Aorta (tissue), 5 donors: ENCODE measurements at regions of chr6 and their contacts with region 1.

Region 1: DNA sequence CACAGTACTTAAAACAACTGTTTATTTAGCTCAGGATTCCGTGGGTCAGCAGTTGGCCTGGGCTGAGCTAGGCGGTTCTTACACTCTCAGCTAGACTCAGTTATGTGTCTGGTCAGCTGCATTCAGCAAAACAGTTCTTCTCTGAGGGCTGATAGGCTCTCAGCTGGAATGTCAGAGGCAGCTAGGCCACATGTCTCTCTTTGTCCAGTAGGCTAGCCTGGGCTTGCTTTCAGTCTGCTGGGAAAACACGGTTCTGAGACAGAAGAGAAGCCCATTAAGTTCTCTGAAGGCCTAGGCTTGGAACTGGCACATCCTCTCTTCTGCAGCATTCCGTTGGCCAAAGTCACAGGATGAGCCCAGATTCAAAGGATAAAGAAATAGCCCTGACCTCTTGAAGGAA is 65.6 kb downstream of the TULP4 start:
- DNase-seq: no peak
- ATAC-seq: no peak
- H3K4me3 ChIP-seq: no peak overlapping the region
- H3K27ac ChIP-seq: no peak overlapping the region
- H3K4me1 ChIP-seq: peaks cover under 1 to 3% of the 10 kb centered on the region in 2 donors
- H3K27me3 ChIP-seq: no peaks in the 10 kb centered on the region

Region 2: GRCh38 chr6:158559895-158560835 is 182.3 kb after region 1 on chr6 and contains the start of gene TMEM181:
- intact Hi-C with region 1: loop called in 1 of 2 experiments (anchors 10 kb)
- DNase-seq: peak; percentile 92 to 96
- ATAC-seq: peak; percentile 94
- H3K4me3 ChIP-seq: peak within 1 kb of the TSS; percentile 67 to 96
- H3K27ac ChIP-seq: peak within 1 kb of the TSS; percentile 47 to 78
- H3K4me1 ChIP-seq: no peaks in the 10 kb centered on the region
- H3K27me3 ChIP-seq: no peaks in the 10 kb centered on the region
- total RNA-seq, gene TMEM181: 23.7 to 25.9 TPM

Region 3: DNA sequence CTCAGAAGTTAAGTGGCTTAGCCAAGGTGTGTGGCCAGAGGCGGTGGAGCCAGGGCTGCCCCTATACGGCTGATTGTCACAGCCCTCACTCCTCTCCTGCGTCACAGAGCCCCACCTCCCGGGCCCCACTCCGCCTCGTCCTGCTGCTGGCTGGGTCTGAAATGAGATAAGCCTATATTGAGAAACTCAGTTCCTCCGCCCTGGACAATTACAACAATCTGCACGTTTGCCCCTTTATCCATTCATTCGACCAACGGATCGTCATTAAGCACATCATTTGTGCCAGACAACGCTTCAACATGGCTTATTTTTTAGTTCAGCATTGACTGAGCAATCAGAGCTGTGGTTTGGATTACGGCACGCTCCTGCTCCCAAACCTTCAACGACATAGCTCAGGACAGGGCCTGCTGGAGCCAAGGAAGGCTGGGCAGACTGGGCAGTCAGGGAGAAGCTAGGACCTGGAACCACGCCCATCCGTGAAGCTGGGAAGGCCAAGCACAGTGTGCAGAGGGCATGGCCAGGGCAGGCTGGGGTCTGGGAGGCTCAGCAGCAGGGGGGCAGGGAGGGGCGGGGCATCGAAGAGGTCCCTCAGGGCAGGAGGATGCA is 457.9 kb after region 1 on chr6:
- intact Hi-C with region 1: no loop called
- DNase-seq: peak in 1 of 2 donors; percentile 59
- ATAC-seq: peak; percentile 75
- H3K4me3 ChIP-seq: no peak overlapping the region
- H3K27ac ChIP-seq: no peak overlapping the region
- H3K4me1 ChIP-seq: no peaks in the 10 kb centered on the region
- H3K27me3 ChIP-seq: no peaks in the 10 kb centered on the region